Mammary epithelial cell (primary cell): ENCODE measurements at regions of chr17 and their contacts with region 1.

Region 1: GRCh38 chr17:75487351-75488070 is 27.8 kb downstream of the CASKIN2 start:
- DNase-seq: no peak
- H3K4me3 ChIP-seq: no peak overlapping the region
- H3K27ac ChIP-seq: no peak overlapping the region
- H3K4me1 ChIP-seq: no peaks in the 10 kb centered on the region
- H3K27me3 ChIP-seq: no peaks in the 10 kb centered on the region
- CTCF ChIP-seq: no peak

Region 2: DNA sequence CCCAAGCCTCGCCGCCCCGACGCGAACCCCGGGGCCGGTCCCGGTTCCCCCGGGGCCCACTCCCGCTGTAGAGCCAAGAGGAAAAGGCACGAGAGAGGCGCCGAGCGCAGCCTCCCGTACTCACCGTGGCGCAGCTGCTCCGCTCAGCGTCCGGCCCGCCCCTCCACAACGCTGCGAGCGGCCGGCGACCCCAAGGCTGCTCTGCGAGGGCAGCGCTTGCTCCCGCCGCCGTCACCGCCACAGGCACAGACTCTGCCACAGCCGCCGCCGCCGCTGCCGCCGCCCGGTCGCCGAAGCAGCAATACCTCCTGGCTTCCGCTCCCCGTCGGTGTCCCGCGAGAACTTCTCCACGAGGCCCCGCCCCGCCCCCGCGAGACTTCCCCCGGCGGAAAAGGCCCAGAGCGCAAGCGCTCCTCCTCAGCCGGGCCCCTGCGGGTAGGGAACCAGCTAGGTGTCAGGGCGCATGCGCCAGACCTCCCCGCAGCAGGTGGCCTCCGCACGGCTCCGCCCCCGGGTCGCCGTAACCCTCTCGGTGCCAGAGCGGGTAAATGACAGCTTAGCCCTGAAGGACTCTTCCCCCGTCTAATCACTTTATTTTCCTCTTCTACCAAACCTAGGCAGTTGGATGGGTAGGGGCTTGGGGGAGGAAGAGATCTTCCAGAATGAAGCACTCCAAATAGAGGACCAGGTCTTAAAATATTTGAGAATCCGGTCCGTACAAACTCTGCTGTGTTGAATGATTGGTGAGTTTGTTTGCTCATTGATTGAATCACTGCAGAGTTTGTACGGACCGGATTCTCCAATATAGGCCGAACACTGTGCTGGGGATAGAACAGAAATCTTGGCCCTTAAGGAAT is 81.9 kb before region 1 on chr17 and contains the start of gene GRB2:
- CTCF ChIA-PET with region 1: no interaction called
- dilution Hi-C with region 1: no loop called
- in situ Hi-C with region 1: no loop called
- intact Hi-C with region 1: no loop called
- DNase-seq: peak; percentile 93
- H3K4me3 ChIP-seq: peak within 1 kb of the TSS; percentile 82 to 93 (median 90)
- H3K27ac ChIP-seq: peak within 1 kb of the TSS; percentile 63
- H3K4me1 ChIP-seq: peaks cover 13% of the 10 kb centered on the region
- H3K27me3 ChIP-seq: no peaks in the 10 kb centered on the region
- CTCF ChIP-seq: no peak
- total RNA-seq, gene GRB2: 61.5 to 78.6 TPM

Region 3: GRCh38 chr17:75531730-75532090 is 44.2 kb after region 1 on chr17:
- CTCF ChIA-PET with region 1: no interaction called
- dilution Hi-C with region 1: loop called (anchors 5 kb)
- in situ Hi-C with region 1: no loop called
- intact Hi-C with region 1: no loop called
- DNase-seq: peak; percentile 38
- H3K4me3 ChIP-seq: no peak overlapping the region
- H3K27ac ChIP-seq: no peak overlapping the region
- H3K4me1 ChIP-seq: peaks cover 4% of the 10 kb centered on the region
- H3K27me3 ChIP-seq: no peaks in the 10 kb centered on the region
- CTCF ChIP-seq: no peak